Activated naive CD4-positive, alpha-beta T cell treated with anti-CD3 and anti-CD28 coated beads for 36 hours (primary cell): ENCODE measurements at regions of chr5 and their contacts with region 1.

Region 1: DNA sequence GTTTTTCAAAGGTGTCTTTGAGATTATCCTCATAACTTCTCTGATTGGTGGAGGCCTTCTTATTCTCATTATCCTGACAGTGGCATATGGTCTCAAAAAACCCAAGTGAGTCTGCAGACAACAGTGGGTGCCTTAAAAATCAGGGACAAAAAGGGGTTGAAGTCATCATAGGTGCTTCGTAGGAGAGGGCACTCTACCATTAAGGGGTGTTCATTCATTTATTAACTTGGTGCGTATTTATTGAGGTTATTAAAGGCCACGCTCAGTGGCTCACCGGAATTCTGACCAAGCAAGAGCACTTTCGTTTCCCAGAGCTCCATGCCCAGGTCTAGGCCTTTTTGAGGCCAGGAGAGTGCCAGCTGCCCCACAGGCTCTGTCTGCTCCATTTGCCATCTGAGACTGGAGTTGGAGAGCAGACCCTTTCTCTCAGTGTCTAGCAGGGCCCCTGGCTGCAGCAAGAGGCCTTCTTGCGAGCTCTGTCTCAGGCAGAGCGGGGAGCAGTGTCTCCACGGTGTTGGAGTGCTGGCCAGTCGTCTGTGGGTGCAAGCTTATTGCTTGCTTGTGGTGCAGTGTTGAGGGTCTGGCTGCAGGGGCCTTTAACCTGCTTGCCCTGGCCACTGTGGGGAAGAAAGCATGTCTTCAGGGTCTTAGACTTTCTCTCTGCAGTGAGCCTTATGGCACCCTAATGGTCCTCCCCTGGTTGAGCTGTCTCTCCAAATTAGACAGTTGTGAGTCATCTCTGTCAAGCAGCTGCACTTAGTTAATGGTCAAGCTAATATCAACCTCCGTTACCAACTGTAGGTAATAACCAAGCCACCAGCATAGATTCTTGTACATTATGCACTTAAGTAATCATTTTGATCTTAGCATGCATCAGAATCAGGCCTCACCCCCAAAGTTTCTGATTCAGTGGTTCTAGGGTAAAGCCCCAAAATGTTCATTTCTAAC is 62.6 kb downstream of the IL31RA start:
- DNase-seq: no peak
- H3K4me3 Mint-ChIP-seq: no peak overlapping the region
- H3K27ac Mint-ChIP-seq: no peak overlapping the region
- H3K4me1 Mint-ChIP-seq: peaks cover 18% of the 10 kb centered on the region
- H3K27me3 Mint-ChIP-seq: no peaks in the 10 kb centered on the region

Region 2: GRCh38 chr5:55324815-55325418 is 588.8 kb before region 1 on chr5:
- CTCF ChIA-PET with region 1: no interaction called
- intact Hi-C with region 1: loop called (anchors 10 kb)
- DNase-seq: no peak
- H3K4me3 Mint-ChIP-seq: no peak overlapping the region
- H3K27ac Mint-ChIP-seq: no peak overlapping the region
- H3K4me1 Mint-ChIP-seq: peaks cover 22% of the 10 kb centered on the region
- H3K27me3 Mint-ChIP-seq: no peaks in the 10 kb centered on the region

Region 3: DNA sequence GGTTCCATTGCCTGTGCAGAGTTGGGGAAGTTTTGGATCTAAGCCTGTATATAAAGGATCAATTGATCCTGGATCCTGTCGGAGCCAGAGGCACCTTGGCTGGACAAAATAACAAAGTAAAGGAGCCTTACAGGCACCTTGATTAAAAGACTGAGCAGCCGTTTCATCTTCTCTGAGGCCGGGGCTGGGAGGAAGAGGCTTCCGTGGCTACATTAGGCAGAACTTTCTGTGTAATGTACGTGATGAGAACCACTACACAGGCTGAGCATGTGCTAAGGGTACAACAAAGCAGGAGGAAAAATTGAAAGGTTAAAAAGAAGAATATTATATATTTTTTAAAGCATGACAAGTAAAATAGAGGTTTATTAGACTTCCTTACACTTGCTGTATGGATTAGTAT is 25.5 kb before region 1 on chr5:
- CTCF ChIA-PET with region 1: no interaction called
- intact Hi-C with region 1: no loop called
- DNase-seq: no peak
- H3K4me3 Mint-ChIP-seq: no peak overlapping the region
- H3K27ac Mint-ChIP-seq: no peak overlapping the region
- H3K4me1 Mint-ChIP-seq: peaks cover 6% of the 10 kb centered on the region
- H3K27me3 Mint-ChIP-seq: peaks cover 4% of the 10 kb centered on the region